Transverse colon (tissue), 4 donors: ENCODE measurements at regions of chr1 and their contacts with region 1.

Region 1: GRCh38 chr1:89351597-89352311 is 12.1 kb upstream of the GBP6 start:
- DNase-seq: no peak
- H3K4me3 ChIP-seq: no peak overlapping the region
- H3K27ac ChIP-seq: no peak overlapping the region
- H3K4me1 ChIP-seq: no peaks in the 10 kb centered on the region
- H3K27me3 ChIP-seq: no peaks in the 10 kb centered on the region
- CTCF ChIP-seq: no peak
- EP300 ChIP-seq: no peak
- POLR2A ChIP-seq: no peak

Region 2: DNA sequence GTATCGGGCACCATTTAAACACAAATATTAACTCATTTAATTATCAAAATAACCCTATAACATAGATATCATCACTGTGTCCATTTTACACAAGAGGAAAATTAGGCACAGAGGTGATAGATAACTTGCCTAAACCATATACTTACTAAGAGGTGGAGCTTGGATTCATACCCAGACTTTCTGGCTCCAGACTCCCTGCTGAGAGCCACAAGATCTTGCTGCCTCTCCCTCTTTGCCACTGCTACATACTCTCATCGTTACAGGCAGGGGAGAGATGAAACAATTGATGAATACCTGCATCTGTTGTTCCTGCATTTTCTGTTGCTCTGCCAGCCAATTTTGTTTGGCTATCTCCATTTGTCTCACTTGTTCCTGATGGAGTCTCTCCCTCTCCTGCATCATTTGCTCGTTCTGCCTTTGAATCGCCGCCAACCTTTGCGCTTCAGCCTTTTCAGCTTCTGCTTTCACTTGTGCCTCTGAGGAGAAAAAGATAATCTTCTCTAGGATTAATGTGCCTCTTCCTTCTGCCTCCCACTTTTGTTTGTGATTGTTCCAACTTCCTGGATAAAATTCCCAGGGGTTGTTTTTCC is 89.7 kb before region 1 on chr1:
- in situ Hi-C with region 1: no loop called
- intact Hi-C with region 1: no loop called
- DNase-seq: no peak
- H3K4me3 ChIP-seq: peak overlapping the region in 2 of 4 donors; percentile 10 to 27
- H3K27ac ChIP-seq: peak overlapping the region in 3 of 4 donors; percentile 18 to 56 (median 39)
- H3K4me1 ChIP-seq: peaks cover 0 to 34% (median 4%) of the 10 kb centered on the region in 4 donors
- H3K27me3 ChIP-seq: no peaks in the 10 kb centered on the region
- CTCF ChIP-seq: no peak
- EP300 ChIP-seq: no peak
- POLR2A ChIP-seq: no peak

Region 3: GRCh38 chr1:89305493-89305892 is 46.3 kb before region 1 on chr1:
- in situ Hi-C with region 1: no loop called
- intact Hi-C with region 1: loop called (anchors 1 kb)
- DNase-seq: no peak
- H3K4me3 ChIP-seq: no peak overlapping the region
- H3K27ac ChIP-seq: no peak overlapping the region
- H3K4me1 ChIP-seq: peaks cover 0 to 10% (median 5%) of the 10 kb centered on the region in 4 donors
- H3K27me3 ChIP-seq: no peaks in the 10 kb centered on the region
- CTCF ChIP-seq: no peak
- EP300 ChIP-seq: no peak
- POLR2A ChIP-seq: no peak